T-cell (primary cell): ENCODE measurements at regions of chr18 and their contacts with region 1.

Region 1: DNA sequence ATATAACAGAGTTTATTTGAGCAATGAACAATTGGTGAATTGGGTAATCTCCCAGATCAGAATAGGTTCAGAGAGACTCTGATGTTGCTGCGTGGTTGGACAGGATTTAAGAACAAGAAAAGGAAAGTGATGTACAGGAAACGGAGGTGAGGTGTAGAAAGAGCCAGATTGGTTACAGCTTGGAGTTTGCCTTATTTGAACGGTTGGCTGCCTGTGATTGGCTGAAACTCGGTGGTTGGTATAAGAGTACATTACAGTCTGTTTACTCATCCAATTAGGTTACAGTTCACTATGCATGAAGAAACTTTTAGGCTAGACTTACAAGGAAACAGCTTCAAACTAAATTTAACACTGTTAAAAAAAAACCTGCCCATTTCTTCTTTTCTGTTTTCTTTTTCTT is 68.0 kb upstream of the CABLES1 start:
- DNase-seq: no peak
- ATAC-seq: no peak
- H3K4me3 ChIP-seq: no peak overlapping the region
- H3K4me3 Mint-ChIP-seq: no peak overlapping the region
- H3K27ac ChIP-seq: no peak overlapping the region
- H3K27ac Mint-ChIP-seq: no peak overlapping the region
- H3K4me1 ChIP-seq: peaks cover 36 to 54% of the 10 kb centered on the region in 2 experiments
- H3K4me1 Mint-ChIP-seq: peaks cover 46 to 56% (median 48%) of the 10 kb centered on the region in 3 donors
- H3K27me3 ChIP-seq: no peaks in the 10 kb centered on the region
- H3K27me3 Mint-ChIP-seq: no peaks in the 10 kb centered on the region

Region 2: GRCh38 chr18:23399067-23399466 is 331.8 kb after region 1 on chr18:
- CTCF ChIA-PET with region 1: no interaction called
- POLR2A ChIA-PET with region 1: interaction called in 1 of 2 experiments, 11 read pairs
- DNase-seq: no peak
- ATAC-seq: no peak
- H3K4me3 ChIP-seq: no peak overlapping the region
- H3K4me3 Mint-ChIP-seq: no peak overlapping the region
- H3K27ac ChIP-seq: no peak overlapping the region
- H3K27ac Mint-ChIP-seq: no peak overlapping the region
- H3K4me1 ChIP-seq: peaks cover 14 to 15% of the 10 kb centered on the region in 2 experiments
- H3K4me1 Mint-ChIP-seq: peaks cover 22 to 31% (median 30%) of the 10 kb centered on the region in 3 donors
- H3K27me3 ChIP-seq: no peaks in the 10 kb centered on the region
- H3K27me3 Mint-ChIP-seq: no peaks in the 10 kb centered on the region